ENCODE measurements at regions of chr11 and their contacts with region 1.

Region 1: GRCh38 chr11:8566613-8567210 is 27.3 kb downstream of the STK33 start:
- ATAC-seq: peak in 7 of 8 experiments; percentile 24 to 94 (median 43)
- H3K4me3 ChIP-seq: no peak overlapping the region
- H3K27ac ChIP-seq: no peak overlapping the region
- H3K4me1 ChIP-seq: no peaks in the 10 kb centered on the region

Region 2: DNA sequence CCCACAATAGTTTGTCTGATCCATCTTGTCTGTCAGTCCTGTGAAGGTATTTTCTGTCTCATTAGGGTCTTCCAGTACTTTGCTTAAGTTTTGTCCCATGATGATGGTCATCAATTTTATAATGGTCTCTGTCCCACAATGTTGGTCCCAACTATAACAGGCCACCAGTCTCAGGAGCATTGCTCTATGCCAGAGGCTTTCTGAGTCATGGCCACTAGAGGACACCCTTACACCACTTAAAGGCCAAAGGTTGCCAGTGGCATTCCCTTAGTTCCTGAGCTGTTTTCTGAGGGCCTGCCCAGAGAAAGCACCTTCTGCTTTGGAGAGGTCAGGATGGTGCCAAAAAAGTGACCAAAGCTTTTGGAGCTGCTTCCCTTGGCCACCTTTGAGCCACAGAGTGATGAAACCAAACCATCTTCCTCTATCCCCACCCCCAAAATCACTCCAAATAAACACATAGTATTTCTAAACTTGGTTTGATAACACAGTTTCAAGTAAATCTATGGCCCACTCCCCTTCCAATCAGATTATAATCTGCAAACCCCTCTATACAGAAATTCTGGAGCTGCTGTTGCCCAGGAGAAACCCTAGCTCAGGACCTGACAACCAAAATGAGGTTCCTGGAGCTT is 560.2 kb before region 1 on chr11:
- in situ Hi-C with region 1: loop called in 1 of 9 experiments (anchors 25 kb)
- ATAC-seq: peak; percentile 91 to 99 (median 96)
- H3K4me3 ChIP-seq: no peak overlapping the region
- H3K27ac ChIP-seq: no peak overlapping the region
- H3K4me1 ChIP-seq: no peaks in the 10 kb centered on the region

Region 3: GRCh38 chr11:8033305-8034105 is 533.2 kb before region 1 on chr11:
- in situ Hi-C with region 1: loop called in 1 of 9 experiments (anchors 25 kb)
- ATAC-seq: peak; percentile 70 to 94 (median 87)
- H3K4me3 ChIP-seq: no peak overlapping the region
- H3K27ac ChIP-seq: no peak overlapping the region
- H3K4me1 ChIP-seq: peaks cover 37 to 51% of the 10 kb centered on the region in 2 donors

Region 4: DNA sequence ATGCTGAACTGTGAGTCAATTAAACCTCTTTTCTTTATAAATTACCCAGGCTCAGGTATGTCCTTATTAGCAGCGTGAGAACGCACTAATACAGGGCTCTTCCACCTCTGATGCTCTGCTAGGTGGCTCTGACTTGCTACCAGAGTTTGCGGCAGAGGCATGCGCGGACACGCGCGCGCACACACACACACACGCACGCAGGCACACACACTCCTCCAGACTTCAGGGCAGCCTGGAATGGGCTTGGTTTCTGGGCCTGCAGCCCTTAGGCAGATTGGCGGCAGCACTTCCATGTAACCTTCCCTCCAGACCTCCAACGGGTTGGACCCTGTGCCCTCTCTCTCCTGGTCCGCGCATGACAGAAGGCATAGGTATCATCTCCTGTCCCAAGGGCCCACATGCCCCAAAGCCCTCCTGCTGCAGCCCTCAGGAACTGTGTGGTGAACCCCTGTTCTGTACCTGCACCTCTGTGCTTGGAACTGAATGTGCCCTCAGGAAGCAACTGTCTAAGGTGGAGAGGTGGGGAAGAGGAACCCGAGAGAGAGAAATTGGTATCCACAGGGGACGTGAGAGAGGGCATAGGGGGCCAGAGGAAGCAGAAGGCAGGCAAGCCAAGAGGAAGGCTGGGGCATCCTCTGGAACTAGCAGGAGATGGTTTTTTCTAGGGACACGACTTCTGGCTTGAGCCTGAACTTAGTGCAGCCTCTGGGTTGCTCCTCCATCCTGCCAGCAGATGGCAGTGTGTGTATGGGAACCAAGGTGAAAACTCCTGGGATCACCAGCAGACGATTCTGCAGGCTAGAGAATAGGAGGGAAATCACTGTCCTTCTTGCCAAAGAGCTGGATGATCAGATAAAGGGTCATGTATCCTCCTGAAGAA is 374.5 kb before region 1 on chr11:
- in situ Hi-C with region 1: loop called in 1 of 9 experiments (anchors 25 kb)
- ATAC-seq: peak; percentile 78 to 99 (median 93)
- H3K4me3 ChIP-seq: no peak overlapping the region
- H3K27ac ChIP-seq: no peak overlapping the region
- H3K4me1 ChIP-seq: peaks cover 0 to 2% of the 10 kb centered on the region in 2 donors

Region 5: DNA sequence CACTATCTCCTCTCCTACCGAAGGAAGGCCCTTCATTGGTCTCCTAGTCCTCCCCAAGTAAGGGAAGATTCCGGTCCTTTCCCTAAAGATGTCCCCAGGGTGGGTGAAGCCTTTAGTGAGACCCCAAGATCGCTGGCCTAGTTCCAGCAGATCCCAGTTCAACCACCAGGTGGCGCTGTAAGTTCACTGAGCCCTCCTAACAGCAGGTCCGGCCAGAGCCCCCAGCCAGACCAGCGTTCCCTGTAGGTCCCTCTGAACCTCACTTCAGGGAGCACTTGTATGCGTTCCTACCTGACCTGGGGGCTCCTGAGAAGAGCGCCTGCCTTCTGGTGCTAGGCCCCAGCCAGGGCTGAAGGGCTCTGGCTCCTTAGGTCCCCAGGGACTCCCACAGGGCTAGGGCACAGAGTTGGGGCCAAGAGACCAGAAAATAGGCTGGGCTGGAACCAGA is 341.1 kb before region 1 on chr11:
- in situ Hi-C with region 1: loop called in 6 of 9 experiments (anchors 10 to 25 kb)
- ATAC-seq: peak; percentile 22 to 89 (median 86)
- H3K4me3 ChIP-seq: no peak overlapping the region
- H3K27ac ChIP-seq: no peak overlapping the region
- H3K4me1 ChIP-seq: peaks cover 10 to 12% of the 10 kb centered on the region in 2 donors

Region 6: DNA sequence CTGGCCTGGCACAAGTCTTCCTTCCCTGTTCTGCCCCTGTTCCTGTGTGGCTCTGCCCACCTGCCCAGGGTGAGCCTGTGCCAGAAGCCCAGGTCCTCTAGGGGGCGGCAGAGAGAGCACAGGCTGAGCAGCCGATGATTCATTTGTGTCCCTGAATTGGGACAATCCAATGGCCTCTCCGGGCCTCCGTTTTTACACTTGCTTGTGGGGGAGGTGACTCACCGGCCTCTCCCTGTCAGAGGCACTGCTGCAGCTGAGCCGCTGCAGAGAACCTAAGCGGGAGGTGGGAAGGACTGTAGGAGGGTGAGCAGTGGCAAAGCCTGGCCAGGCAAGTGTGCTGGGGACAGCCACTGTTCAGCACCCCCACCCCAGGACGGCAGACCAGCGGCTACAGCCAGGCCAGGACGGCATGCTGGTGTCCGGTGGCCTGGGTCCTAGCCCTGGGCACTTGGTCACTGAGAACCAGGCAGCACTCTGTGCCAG is 237.8 kb before region 1 on chr11:
- in situ Hi-C with region 1: no loop called
- ATAC-seq: peak; percentile 62 to 90 (median 88)
- H3K4me3 ChIP-seq: peak overlapping the region in 1 of 5 donors; percentile 15
- H3K27ac ChIP-seq: no peak overlapping the region
- H3K4me1 ChIP-seq: peaks cover 39 to 43% of the 10 kb centered on the region in 2 donors

Region 7: GRCh38 chr11:8384199-8384821 is 182.4 kb before region 1 on chr11:
- in situ Hi-C with region 1: loop called in 1 of 9 experiments (anchors 25 kb)
- ATAC-seq: peak; percentile 37 to 90 (median 68)
- H3K4me3 ChIP-seq: no peak overlapping the region
- H3K27ac ChIP-seq: peak overlapping the region in 1 of 2 donors; percentile 23
- H3K4me1 ChIP-seq: peaks cover 8 to 18% of the 10 kb centered on the region in 2 donors